OCI-LY7 (cell line): ENCODE measurements at regions of chr14 and their contacts with region 1.

Region 1: GRCh38 chr14:98798099-98798498 is 473.9 kb downstream of the BCL11B start:
- DNase-seq: peak; percentile 8
- H3K4me3 ChIP-seq: no peak overlapping the region
- H3K27ac ChIP-seq: no peak overlapping the region
- H3K4me1 ChIP-seq: peaks cover 16% of the 10 kb centered on the region
- CTCF ChIP-seq: no peak

Region 2: DNA sequence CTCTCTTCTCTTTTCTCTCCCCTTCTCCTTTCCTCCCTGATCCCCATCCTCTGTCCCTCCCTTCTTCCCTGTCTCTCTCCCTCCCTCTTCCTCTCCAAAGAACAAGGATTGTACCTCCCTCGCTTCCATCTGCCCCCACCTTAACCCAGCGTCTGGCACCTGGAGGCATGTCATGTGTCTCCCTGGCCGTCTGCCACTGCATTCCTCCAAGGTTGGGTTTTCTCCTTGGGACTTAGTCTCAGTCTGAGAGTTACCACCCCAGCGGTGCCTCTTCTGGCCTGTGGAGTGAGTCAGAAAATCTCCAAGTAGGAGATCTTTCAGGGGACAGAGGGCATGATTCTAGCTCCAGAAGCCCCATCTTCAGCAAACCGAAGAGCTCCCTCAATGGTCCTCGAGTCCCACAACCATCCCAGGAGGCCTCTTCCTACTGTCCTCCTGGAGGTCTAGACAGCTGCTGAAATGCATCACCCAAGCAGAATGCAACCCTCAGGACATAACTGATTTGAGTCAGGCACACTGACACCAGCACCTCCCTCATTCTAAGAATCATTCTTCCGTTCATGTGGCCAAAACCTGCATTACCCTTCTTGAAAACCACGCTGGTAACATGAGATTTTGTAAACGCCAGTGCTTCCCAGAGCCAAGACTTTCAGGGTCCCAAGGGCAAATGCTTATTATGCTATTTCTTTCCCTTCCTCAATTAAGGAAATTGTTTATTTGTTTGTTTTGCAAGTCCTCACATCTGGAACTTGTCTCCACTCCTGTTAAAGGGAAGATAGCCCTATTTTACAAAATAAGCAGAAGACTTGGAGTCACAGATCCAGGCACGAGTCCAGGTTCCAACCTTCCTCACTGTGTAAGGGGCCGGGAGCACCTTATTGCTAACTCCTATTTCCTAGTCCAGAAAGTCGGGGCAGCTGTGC is 10.6 kb after region 1 on chr14:
- CTCF ChIA-PET with region 1: no interaction called
- POLR2A ChIA-PET with region 1: interaction called, 14 read pairs
- intact Hi-C with region 1: no loop called
- DNase-seq: no peak
- H3K4me3 ChIP-seq: no peak overlapping the region
- H3K27ac ChIP-seq: no peak overlapping the region
- H3K4me1 ChIP-seq: peaks cover 10% of the 10 kb centered on the region
- CTCF ChIP-seq: no peak